Esophagus muscularis mucosa (tissue), 4 donors: ENCODE measurements at regions of chr3 and their contacts with region 1.

Region 1: GRCh38 chr3:24237971-24238767 is 256.5 kb downstream of the THRB start:
- DNase-seq: no peak
- H3K4me3 ChIP-seq: no peak overlapping the region
- H3K27ac ChIP-seq: peak overlapping the region; percentile 16 to 40 (median 31)
- H3K4me1 ChIP-seq: peaks cover 18 to 60% (median 54%) of the 10 kb centered on the region in 4 donors
- H3K27me3 ChIP-seq: no peaks in the 10 kb centered on the region
- CTCF ChIP-seq: peak; percentile 59 to 75 (median 73)
- EP300 ChIP-seq: no peak
- POLR2A ChIP-seq: no peak

Region 2: GRCh38 chr3:23999012-23999641 is 239.0 kb before region 1 on chr3:
- intact Hi-C with region 1: loop called (anchors 2 kb)
- DNase-seq: no peak
- H3K4me3 ChIP-seq: peak overlapping the region in 1 of 4 donors; percentile 15
- H3K27ac ChIP-seq: no peak overlapping the region
- H3K4me1 ChIP-seq: peaks cover 7 to 13% (median 11%) of the 10 kb centered on the region in 4 donors
- H3K27me3 ChIP-seq: no peaks in the 10 kb centered on the region
- CTCF ChIP-seq: peak; percentile 90 to 96 (median 91)
- EP300 ChIP-seq: no peak
- POLR2A ChIP-seq: no peak

Region 3: GRCh38 chr3:24185738-24186384 is 52.3 kb before region 1 on chr3:
- intact Hi-C with region 1: loop called (anchors 2 kb)
- DNase-seq: no peak
- H3K4me3 ChIP-seq: no peak overlapping the region
- H3K27ac ChIP-seq: peak overlapping the region in 1 of 4 donors; percentile 10
- H3K4me1 ChIP-seq: peaks cover 9 to 18% (median 10%) of the 10 kb centered on the region in 4 donors
- H3K27me3 ChIP-seq: no peaks in the 10 kb centered on the region
- CTCF ChIP-seq: peak; percentile 52 to 62 (median 53)
- EP300 ChIP-seq: no peak
- POLR2A ChIP-seq: no peak